ENCODE measurements at regions of chr4 and their contacts with region 1.

Region 1: GRCh38 chr4:17544205-17544604 is 29.2 kb downstream of the CLRN2 start:
- DNase-seq: no peak
- ATAC-seq: peak; percentile 41; the same call in 2 of the 3 replicates
- H3K4me3 ChIP-seq: no peak overlapping the region
- H3K27ac ChIP-seq: no peak overlapping the region
- H3K4me1 ChIP-seq: no peaks in the 10 kb centered on the region
- H3K27me3 ChIP-seq: no peaks in the 10 kb centered on the region
- CTCF ChIP-seq: no peak
- EP300 ChIP-seq: no peak
- POLR2A ChIP-seq: no peak
- RAD21 ChIP-seq: no peak

Region 2: GRCh38 chr4:17567271-17567670 is 23.1 kb after region 1 on chr4:
- CTCF ChIA-PET with region 1: interaction called, 10 read pairs
- POLR2A ChIA-PET with region 1: no interaction called
- RAD21 ChIA-PET with region 1: no interaction called
- SMC1A ChIA-PET with region 1: interaction called, 4 read pairs
- in situ Hi-C with region 1: no loop called
- intact Hi-C with region 1: no loop called
- DNase-seq: no peak
- ATAC-seq: no peak
- H3K4me3 ChIP-seq: no peak overlapping the region
- H3K27ac ChIP-seq: no peak overlapping the region
- H3K4me1 ChIP-seq: no peaks in the 10 kb centered on the region
- H3K27me3 ChIP-seq: no peaks in the 10 kb centered on the region; a peak in 1 of 4 replicates
- CTCF ChIP-seq: no peak
- EP300 ChIP-seq: no peak
- POLR2A ChIP-seq: no peak
- RAD21 ChIP-seq: no peak

Region 3: DNA sequence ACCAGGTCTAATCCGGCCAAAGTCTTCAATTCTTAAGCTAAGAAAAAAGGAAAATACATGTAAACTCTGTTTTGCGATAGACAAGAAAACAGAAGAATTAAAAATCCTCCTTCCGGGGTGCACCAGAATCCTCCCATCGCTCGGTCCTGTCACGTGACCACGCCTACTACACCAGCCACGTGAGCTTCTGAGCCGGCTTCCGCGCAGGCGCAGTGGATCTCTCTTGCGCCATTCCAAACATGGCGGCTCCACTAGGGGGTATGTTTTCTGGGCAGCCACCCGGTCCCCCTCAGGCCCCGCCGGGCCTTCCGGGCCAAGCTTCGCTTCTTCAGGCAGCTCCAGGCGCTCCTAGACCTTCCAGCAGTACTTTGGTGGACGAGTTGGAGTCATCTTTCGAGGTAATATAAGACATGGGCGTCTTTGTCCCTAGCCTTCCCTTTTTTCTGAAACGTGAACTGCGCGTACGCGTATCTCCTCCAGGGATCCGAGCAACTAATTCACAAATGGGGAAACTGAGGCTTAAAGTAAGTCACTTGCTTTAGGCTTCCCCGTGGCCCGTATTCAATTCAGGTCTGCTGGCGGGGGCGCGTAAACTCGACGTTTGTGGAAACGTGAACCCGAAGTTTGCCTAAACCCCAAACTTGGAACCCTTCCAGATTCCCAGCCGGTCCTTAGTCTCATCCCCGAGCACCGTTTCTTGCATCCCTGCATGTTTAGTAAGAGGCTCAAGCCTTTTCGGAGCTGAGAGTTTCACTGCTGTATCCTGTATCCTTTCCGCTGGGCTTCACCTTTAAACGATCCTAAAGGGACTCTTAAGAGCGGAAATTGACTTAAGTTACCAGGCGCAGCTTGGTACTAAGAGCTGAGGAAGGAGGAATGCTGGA is 70.5 kb after region 1 on chr4 and contains the start of gene MED28:
- CTCF ChIA-PET with region 1: interaction called, 16 read pairs
- POLR2A ChIA-PET with region 1: interaction called, 4 read pairs
- RAD21 ChIA-PET with region 1: interaction called, 3 read pairs
- SMC1A ChIA-PET with region 1: interaction called, 3 read pairs
- in situ Hi-C with region 1: no loop called
- intact Hi-C with region 1: no loop called
- DNase-seq: peak; percentile 68
- ATAC-seq: peak; percentile 89
- H3K4me3 ChIP-seq: peak within 1 kb of the TSS; percentile 79
- H3K27ac ChIP-seq: peak within 1 kb of the TSS; percentile 84
- H3K4me1 ChIP-seq: peaks cover 6% of the 10 kb centered on the region; the same call in 1 of the 2 replicates
- H3K27me3 ChIP-seq: no peaks in the 10 kb centered on the region
- CTCF ChIP-seq: 0 out of 6 replicates have a peak, but pooled peaks of 1 of the 3 experiments have one; percentile 2
- EP300 ChIP-seq: no peak
- POLR2A ChIP-seq: peak; percentile 91
- RAD21 ChIP-seq: no peak
- polyA plus RNA-seq, gene MED28: 44.4 to 77.4 TPM

Region 4: DNA sequence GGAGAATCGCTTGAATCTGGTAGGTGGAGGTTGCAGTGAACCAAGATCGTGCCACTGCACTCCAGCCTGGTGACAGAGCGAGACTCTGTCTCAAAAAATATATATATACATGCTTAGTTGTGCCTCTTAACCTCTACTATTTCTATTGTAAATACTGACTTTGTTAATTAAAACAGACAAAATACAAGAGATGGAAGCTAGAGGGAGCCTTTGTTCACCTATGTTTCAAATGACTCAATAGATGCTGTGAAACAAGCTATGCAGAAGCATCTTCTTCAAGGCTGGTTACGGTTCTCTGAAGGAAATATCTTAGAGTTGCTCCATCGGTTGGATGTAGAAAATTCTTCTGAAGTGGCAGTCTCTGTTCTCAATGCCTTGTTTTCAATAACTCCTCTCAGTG is 272.8 kb after region 1 on chr4:
- CTCF ChIA-PET with region 1: interaction called, 30 read pairs
- POLR2A ChIA-PET with region 1: no interaction called
- RAD21 ChIA-PET with region 1: interaction called, 10 read pairs
- SMC1A ChIA-PET with region 1: interaction called, 4 read pairs
- in situ Hi-C with region 1: no loop called
- intact Hi-C with region 1: no loop called
- DNase-seq: peak; percentile 41
- ATAC-seq: peak; percentile 83
- H3K4me3 ChIP-seq: no peak overlapping the region
- H3K27ac ChIP-seq: no peak overlapping the region
- H3K4me1 ChIP-seq: no peaks in the 10 kb centered on the region
- H3K27me3 ChIP-seq: no peaks in the 10 kb centered on the region; a peak in 1 of 4 replicates
- CTCF ChIP-seq: peak; percentile 37 to 63 (median 61); a peak in 5 of 6 replicates
- EP300 ChIP-seq: no peak
- POLR2A ChIP-seq: no peak
- RAD21 ChIP-seq: peak; percentile 82

Region 5: DNA sequence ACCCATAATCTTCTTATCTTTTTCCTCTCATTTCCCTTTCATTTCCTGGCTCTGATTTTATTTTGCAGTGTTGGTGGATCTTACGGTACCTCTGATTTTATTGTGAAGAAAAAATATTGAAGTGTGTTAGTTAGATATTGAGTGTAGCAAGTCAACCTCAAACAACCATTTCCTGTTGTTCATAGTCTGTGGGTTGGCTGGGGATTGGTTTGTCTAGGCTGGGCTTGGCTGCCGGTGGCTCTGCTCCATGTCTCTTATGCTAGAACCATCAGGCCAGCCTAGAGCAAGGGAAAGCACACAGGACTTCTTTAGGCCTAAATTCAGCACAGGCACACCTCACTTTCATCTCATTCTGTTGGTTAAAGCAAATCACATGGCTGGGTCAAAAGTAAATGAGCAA is 860.4 kb after region 1 on chr4:
- CTCF ChIA-PET with region 1: no interaction called
- POLR2A ChIA-PET with region 1: no interaction called
- RAD21 ChIA-PET with region 1: no interaction called
- SMC1A ChIA-PET with region 1: no interaction called
- in situ Hi-C with region 1: no loop called
- intact Hi-C with region 1: no loop called
- DNase-seq: no peak
- ATAC-seq: no peak
- H3K4me3 ChIP-seq: no peak overlapping the region
- H3K27ac ChIP-seq: no peak overlapping the region
- H3K4me1 ChIP-seq: no peaks in the 10 kb centered on the region
- H3K27me3 ChIP-seq: no peaks in the 10 kb centered on the region; a peak in 1 of 4 replicates
- CTCF ChIP-seq: no peak
- EP300 ChIP-seq: no peak
- POLR2A ChIP-seq: no peak
- RAD21 ChIP-seq: no peak

Region 6: DNA sequence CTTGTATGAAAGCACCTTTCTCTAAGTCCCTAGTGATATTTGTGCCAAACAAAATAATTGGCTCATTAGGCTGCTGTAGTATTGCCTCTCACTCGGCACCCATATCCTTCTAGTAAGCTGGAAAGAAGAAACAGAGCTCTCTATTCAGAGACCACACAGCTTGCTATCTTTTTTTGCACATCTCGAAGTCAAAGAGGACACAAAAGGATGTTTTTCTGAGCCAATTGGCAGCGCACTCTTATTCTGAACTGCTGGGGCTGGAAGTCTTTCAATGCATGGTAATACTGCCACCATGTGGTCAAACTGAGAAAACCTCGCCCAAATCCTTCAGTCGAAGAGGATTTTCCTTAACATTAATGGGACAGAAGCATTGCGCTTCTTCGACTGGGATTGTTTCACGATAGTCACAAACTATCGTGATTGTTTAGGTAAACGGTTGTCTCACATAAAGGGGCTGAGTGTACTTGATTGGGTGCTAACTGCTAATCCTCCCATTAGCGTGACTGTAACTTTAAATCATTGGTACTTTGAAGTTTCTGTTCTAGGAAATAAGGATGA is 1049.3 kb after region 1 on chr4:
- CTCF ChIA-PET with region 1: interaction called, 7 read pairs
- POLR2A ChIA-PET with region 1: no interaction called
- RAD21 ChIA-PET with region 1: interaction called, 9 read pairs
- SMC1A ChIA-PET with region 1: interaction called, 11 read pairs
- in situ Hi-C with region 1: loop called (anchors 5 kb)
- intact Hi-C with region 1: loop called (anchors 1 kb)
- DNase-seq: peak; percentile 7
- ATAC-seq: peak; percentile 85
- H3K4me3 ChIP-seq: no peak overlapping the region
- H3K27ac ChIP-seq: no peak overlapping the region
- H3K4me1 ChIP-seq: no peaks in the 10 kb centered on the region
- H3K27me3 ChIP-seq: no peaks in the 10 kb centered on the region
- CTCF ChIP-seq: peak; percentile 65 to 83 (median 74)
- EP300 ChIP-seq: no peak
- POLR2A ChIP-seq: no peak
- RAD21 ChIP-seq: peak; percentile 94